Ovary (tissue), 10 donors: ENCODE measurements at regions of chr1 and their contacts with region 1.

Region 1: DNA sequence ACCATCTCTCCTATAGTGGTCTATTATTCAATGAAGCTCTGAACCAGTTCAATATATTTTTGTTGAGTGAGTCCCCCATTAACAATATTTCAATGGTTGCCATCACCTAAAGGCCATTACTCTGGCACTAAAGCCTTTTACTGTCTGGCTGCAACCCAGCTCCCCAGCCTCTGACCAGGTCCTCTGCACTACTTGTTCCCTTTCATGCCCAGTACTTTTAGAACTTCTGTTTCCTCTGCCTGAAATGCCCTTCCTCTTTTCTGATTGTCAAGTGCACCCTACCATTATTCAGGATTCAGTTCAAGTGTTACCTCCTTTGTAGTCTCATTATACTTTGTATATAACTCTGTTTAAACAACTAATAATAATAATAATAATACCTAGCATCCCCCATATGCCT is 30.4 kb upstream of the ZFYVE9 start:
- DNase-seq: no peak
- H3K4me3 ChIP-seq: no peak overlapping the region
- H3K27ac ChIP-seq: no peak overlapping the region
- H3K4me1 ChIP-seq: no peaks in the 10 kb centered on the region
- H3K27me3 ChIP-seq: no peaks in the 10 kb centered on the region
- CTCF ChIP-seq: no peak
- EP300 ChIP-seq: no peak
- POLR2A ChIP-seq: no peak

Region 2: GRCh38 chr1:53001128-53001527 is 889.6 kb after region 1 on chr1:
- intact Hi-C with region 1: loop called in 1 of 4 experiments (anchors 10 kb)
- DNase-seq: no peak
- H3K4me3 ChIP-seq: no peak overlapping the region
- H3K27ac ChIP-seq: no peak overlapping the region
- H3K4me1 ChIP-seq: no peaks in the 10 kb centered on the region
- H3K27me3 ChIP-seq: no peaks in the 10 kb centered on the region
- CTCF ChIP-seq: no peak
- EP300 ChIP-seq: no peak
- POLR2A ChIP-seq: no peak